PC-9 (cell line): ENCODE measurements at regions of chr17 and their contacts with region 1.

Region 1: GRCh38 chr17:63950941-63951507 is 18.9 kb upstream of the CD79B start:
- DNase-seq: peak; percentile 50 to 62
- H3K4me3 ChIP-seq: no peak overlapping the region
- H3K27ac ChIP-seq: no peak overlapping the region
- H3K4me1 ChIP-seq: no peaks in the 10 kb centered on the region
- H3K27me3 ChIP-seq: no peaks in the 10 kb centered on the region; the same call in 1 of the 2 replicates
- CTCF ChIP-seq: peak; percentile 83

Region 2: GRCh38 chr17:62597935-62598334 is 1353.1 kb before region 1 on chr17:
- CTCF ChIA-PET with region 1: no interaction called
- POLR2A ChIA-PET with region 1: no interaction called
- intact Hi-C with region 1: no loop called
- DNase-seq: no peak
- H3K4me3 ChIP-seq: no peak overlapping the region
- H3K27ac ChIP-seq: no peak overlapping the region
- H3K4me1 ChIP-seq: no peaks in the 10 kb centered on the region
- H3K27me3 ChIP-seq: no peaks in the 10 kb centered on the region
- CTCF ChIP-seq: no peak

Region 3: DNA sequence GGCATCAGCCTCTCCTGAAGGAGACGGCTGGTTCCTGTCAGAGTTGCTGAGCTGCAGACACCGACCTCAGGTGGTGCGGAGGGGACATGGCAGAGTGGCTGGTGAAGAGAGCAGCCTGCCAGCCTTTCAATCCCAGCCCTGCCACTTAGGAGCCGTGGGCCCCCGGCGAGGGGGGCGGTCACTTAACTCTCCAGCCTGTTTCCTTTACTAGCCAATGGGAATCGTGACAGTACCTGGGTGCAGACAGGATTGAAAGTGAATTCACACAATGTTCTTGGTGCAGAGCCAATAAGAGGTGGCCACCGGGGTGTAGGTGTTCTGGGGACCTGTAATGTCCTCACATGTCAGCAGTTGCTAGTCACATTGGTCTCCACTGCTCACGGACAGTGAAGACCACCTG is 460.7 kb before region 1 on chr17:
- CTCF ChIA-PET with region 1: interaction called, 20 read pairs
- POLR2A ChIA-PET with region 1: no interaction called
- intact Hi-C with region 1: no loop called
- DNase-seq: no peak
- H3K4me3 ChIP-seq: no peak overlapping the region
- H3K27ac ChIP-seq: no peak overlapping the region
- H3K4me1 ChIP-seq: no peaks in the 10 kb centered on the region
- H3K27me3 ChIP-seq: peaks cover 73% of the 10 kb centered on the region
- CTCF ChIP-seq: no peak

Region 4: DNA sequence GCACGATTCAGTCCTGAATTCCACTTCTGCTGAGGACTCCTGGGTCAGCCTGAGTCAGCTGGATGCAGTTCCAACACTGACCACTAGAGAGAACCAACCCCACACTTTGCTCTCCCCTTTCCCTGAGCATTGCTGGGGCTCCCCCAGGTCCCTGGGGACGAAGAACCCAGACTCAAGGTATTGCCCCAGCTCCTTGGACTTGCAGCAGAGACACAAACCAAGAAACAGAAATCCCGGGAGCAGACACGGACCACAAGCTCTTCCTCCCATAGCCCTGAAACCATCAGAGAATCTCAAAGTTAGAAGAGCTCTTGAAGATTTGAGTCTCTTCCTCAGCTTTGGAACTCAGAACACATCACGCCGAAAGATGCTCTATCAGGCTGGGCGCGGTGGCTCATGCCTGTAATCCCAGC is 31.7 kb before region 1 on chr17:
- CTCF ChIA-PET with region 1: interaction called, 7 read pairs
- POLR2A ChIA-PET with region 1: no interaction called
- intact Hi-C with region 1: loop called (anchors 1 kb)
- DNase-seq: peak in 1 of 2 experiments; percentile 66
- H3K4me3 ChIP-seq: no peak overlapping the region
- H3K27ac ChIP-seq: no peak overlapping the region
- H3K4me1 ChIP-seq: no peaks in the 10 kb centered on the region
- H3K27me3 ChIP-seq: peaks cover 18% of the 10 kb centered on the region; the same call in 1 of the 2 replicates
- CTCF ChIP-seq: peak; percentile 96

Region 5: DNA sequence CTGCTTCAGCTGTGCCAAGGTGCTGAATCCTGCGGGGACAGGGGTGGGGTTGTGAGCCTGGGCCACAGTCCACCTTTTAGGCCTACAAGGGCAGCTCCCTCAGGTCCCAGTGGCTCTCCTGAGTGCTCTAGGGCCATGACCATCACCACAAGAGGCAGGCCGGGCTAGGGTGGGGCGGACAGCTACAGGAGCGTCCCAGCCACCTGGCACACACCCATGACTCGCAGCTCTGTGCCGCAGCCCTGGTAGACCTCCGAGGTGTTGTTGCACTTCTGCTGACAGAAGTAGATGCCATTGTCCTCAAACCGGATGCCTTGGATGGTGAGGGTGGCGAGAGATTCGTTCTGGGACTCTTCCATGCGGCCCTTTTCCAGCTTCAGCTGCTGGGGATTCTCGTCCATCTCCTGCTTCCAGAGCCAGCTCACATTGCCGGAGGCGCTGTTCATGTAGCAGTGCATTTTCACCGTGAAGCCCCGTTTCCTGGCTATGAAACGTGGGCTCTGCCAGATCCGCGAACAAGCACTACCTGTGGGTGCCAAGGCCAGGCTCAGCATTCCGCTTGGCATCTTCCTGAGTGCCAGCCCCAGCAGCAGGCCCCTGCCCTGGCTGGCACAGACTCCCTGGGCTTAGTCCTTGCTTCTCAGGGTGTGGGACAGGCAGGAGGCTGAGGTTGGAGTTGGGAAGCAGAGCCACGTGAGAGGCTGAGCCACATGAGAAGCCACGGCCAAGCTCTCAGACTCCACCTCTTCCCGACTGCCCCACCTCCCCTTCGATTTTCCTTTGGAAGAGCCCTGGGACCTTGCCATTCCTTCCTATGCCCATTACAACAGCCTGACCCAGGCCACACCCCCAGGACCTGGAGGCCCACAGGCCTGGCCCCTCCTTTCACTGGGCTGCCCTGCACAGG is 20.9 kb before region 1 on chr17:
- CTCF ChIA-PET with region 1: no interaction called
- POLR2A ChIA-PET with region 1: no interaction called
- intact Hi-C with region 1: no loop called
- DNase-seq: no peak
- H3K4me3 ChIP-seq: no peak overlapping the region
- H3K27ac ChIP-seq: no peak overlapping the region
- H3K4me1 ChIP-seq: no peaks in the 10 kb centered on the region
- H3K27me3 ChIP-seq: peaks cover 14% of the 10 kb centered on the region; the same call in 1 of the 2 replicates
- CTCF ChIP-seq: no peak

Region 6: DNA sequence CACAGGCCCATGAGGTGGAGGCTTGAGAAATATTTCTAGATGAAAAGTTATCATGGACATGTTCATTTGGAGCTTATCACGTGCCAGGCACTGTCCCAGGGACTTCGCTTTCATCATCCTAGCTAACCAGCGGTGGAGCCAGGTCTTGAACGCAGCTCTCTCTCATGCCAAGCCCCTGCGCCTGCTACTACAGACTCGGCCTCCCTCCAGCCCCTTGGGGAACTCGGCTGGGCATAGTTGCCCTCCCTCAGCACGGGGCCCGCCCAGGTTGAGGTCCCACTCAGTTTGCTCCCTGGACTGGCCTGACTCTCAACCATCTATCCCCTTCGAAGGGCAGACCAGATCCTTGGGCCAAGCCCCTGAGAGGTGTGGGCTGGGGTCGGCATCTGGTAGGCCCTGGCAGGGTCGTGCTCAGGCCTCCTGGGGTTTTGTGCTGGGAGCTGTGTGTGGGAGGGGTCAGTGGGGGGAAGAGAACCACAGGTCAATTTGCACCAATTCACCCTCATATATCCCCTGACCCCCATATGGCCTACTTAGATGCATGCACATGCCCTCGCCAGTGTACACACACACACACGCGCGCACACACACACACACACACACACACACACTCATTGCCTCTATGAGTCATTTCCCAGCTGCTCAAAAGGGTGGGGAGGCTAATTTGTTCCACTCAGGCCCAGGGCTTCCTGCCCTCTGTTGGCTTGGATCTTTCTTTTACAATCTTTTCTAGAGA is 33.8 kb after region 1 on chr17:
- CTCF ChIA-PET with region 1: interaction called, 4 read pairs
- POLR2A ChIA-PET with region 1: interaction called, 3 read pairs
- intact Hi-C with region 1: loop called (anchors 5 kb)
- DNase-seq: peak; percentile 55 to 63
- H3K4me3 ChIP-seq: no peak overlapping the region
- H3K27ac ChIP-seq: no peak overlapping the region
- H3K4me1 ChIP-seq: peaks cover 4% of the 10 kb centered on the region; the same call in 1 of the 2 replicates
- H3K27me3 ChIP-seq: no peaks in the 10 kb centered on the region
- CTCF ChIP-seq: no peak

Region 7: GRCh38 chr17:64025732-64026294 is 74.8 kb after region 1 on chr17:
- CTCF ChIA-PET with region 1: interaction called, 4 read pairs
- POLR2A ChIA-PET with region 1: no interaction called
- intact Hi-C with region 1: loop called (anchors 1 kb)
- DNase-seq: peak; percentile 57 to 77
- H3K4me3 ChIP-seq: peak overlapping the region; percentile 16; the same call in 1 of the 2 replicates
- H3K27ac ChIP-seq: no peak overlapping the region
- H3K4me1 ChIP-seq: 0 out of 2 replicates have a peak, but pooled peaks cover 4% of the 10 kb centered on the region
- H3K27me3 ChIP-seq: no peaks in the 10 kb centered on the region
- CTCF ChIP-seq: peak; percentile 96